Heart left ventricle (tissue), 16 donors: ENCODE measurements at regions of chr5 and their contacts with region 1.

Region 1: GRCh38 chr5:141564216-141564692 is 54.5 kb downstream of the DIAPH1 start:
- DNase-seq: peak in 3 of 5 donors; percentile 51 to 75 (median 72)
- ATAC-seq: peak; percentile 50 to 70 (median 59)
- H3K4me3 ChIP-seq: no peak overlapping the region
- H3K27ac ChIP-seq: peak overlapping the region in 11 of 12 donors; percentile 37 to 75 (median 61)
- H3K4me1 ChIP-seq: peaks cover 3 to 35% (median 23%) of the 10 kb centered on the region in 12 donors
- H3K27me3 ChIP-seq: no peaks in the 10 kb centered on the region
- CTCF ChIP-seq: peak; percentile 93 to 99 (median 96)
- POLR2A ChIP-seq: no peak

Region 2: GRCh38 chr5:141084487-141084990 is 479.7 kb before region 1 on chr5:
- intact Hi-C with region 1: loop called in 1 of 10 experiments (anchors 5 kb)
- DNase-seq: peak in 3 of 5 donors; percentile 40 to 52 (median 46)
- ATAC-seq: peak; percentile 75 to 89 (median 88)
- H3K4me3 ChIP-seq: peak overlapping the region; percentile 6 to 69 (median 54)
- H3K27ac ChIP-seq: peak overlapping the region in 10 of 12 donors; percentile 34 to 78 (median 71)
- H3K4me1 ChIP-seq: no peaks in the 10 kb centered on the region
- H3K27me3 ChIP-seq: peaks cover 0 to 21% (median 0%) of the 10 kb centered on the region in 9 donors
- CTCF ChIP-seq: peak; percentile 35 to 76 (median 54)
- POLR2A ChIP-seq: no peak

Region 3: GRCh38 chr5:141172378-141173204 is 391.7 kb before region 1 on chr5 and contains the start of gene PCDHB7:
- intact Hi-C with region 1: loop called in 3 of 10 experiments (anchors 10 kb)
- DNase-seq: no peak
- ATAC-seq: no peak
- H3K4me3 ChIP-seq: peak within 1 kb of the TSS in 10 of 12 donors; percentile 6 to 56 (median 25)
- H3K27ac ChIP-seq: no peak within 1 kb of the TSS
- H3K4me1 ChIP-seq: no peaks in the 10 kb centered on the region
- H3K27me3 ChIP-seq: peaks cover 0 to 47% (median 22%) of the 10 kb centered on the region in 9 donors
- CTCF ChIP-seq: peak in 11 of 12 donors; percentile 31 to 55 (median 42)
- POLR2A ChIP-seq: no peak
- total RNA-seq, gene PCDHB7: 0.52 to 1.3 (median 0.91) TPM

Region 4: GRCh38 chr5:141223112-141223783 is 341.0 kb before region 1 on chr5 and contains the start of gene PCDHB14:
- intact Hi-C with region 1: loop called in 3 of 10 experiments (anchors 5 to 10 kb)
- DNase-seq: no peak
- ATAC-seq: peak in 2 of 4 donors; percentile 43 to 57
- H3K4me3 ChIP-seq: peak within 1 kb of the TSS in 10 of 12 donors; percentile 15 to 43 (median 30)
- H3K27ac ChIP-seq: no peak within 1 kb of the TSS
- H3K4me1 ChIP-seq: no peaks in the 10 kb centered on the region
- H3K27me3 ChIP-seq: no peaks in the 10 kb centered on the region
- CTCF ChIP-seq: peak in 6 of 12 donors; percentile 17 to 41 (median 30)
- POLR2A ChIP-seq: no peak
- total RNA-seq, gene PCDHB14: 2.6 to 6.1 (median 4.3) TPM

Region 5: GRCh38 chr5:141320225-141321169 is 243.8 kb before region 1 on chr5 and contains the start of gene TAF7:
- intact Hi-C with region 1: loop called in 8 of 10 experiments (anchors 2 to 10 kb)
- DNase-seq: peak; percentile 89 to 96 (median 93)
- ATAC-seq: peak; percentile 99 to 100 (median 100)
- H3K4me3 ChIP-seq: peak within 1 kb of the TSS; percentile 32 to 88 (median 74)
- H3K27ac ChIP-seq: peak within 1 kb of the TSS; percentile 85 to 97 (median 92)
- H3K4me1 ChIP-seq: peaks cover 0 to 18% (median 8%) of the 10 kb centered on the region in 12 donors
- H3K27me3 ChIP-seq: no peaks in the 10 kb centered on the region
- CTCF ChIP-seq: peak; percentile 70 to 91 (median 86)
- POLR2A ChIP-seq: peak; percentile 91 to 94
- total RNA-seq, gene TAF7: 73.9 to 107 (median 99.9) TPM

Region 6: GRCh38 chr5:141412854-141413539 is 151.3 kb before region 1 on chr5 and contains the start of gene PCDHGA10:
- intact Hi-C with region 1: loop called in 7 of 10 experiments (anchors 2 to 5 kb)
- DNase-seq: peak in 3 of 5 donors; percentile 53 to 61 (median 59)
- ATAC-seq: peak; percentile 24 to 66 (median 64)
- H3K4me3 ChIP-seq: peak within 1 kb of the TSS in 10 of 12 donors; percentile 10 to 49 (median 36)
- H3K27ac ChIP-seq: peak within 1 kb of the TSS in 1 of 12 donors; percentile 36
- H3K4me1 ChIP-seq: peaks cover 0 to 4% (median 0%) of the 10 kb centered on the region in 12 donors
- H3K27me3 ChIP-seq: peaks cover 0 to 78% (median 0%) of the 10 kb centered on the region in 9 donors
- CTCF ChIP-seq: peak; percentile 26 to 60 (median 42)
- POLR2A ChIP-seq: no peak
- total RNA-seq, gene PCDHGA10: 3.3 to 11.3 (median 6.1) TPM

Region 7: GRCh38 chr5:141524604-141525597 is 39.4 kb before region 1 on chr5:
- intact Hi-C with region 1: loop called in 8 of 10 experiments (anchors 2 to 5 kb)
- DNase-seq: peak; percentile 88 to 91 (median 88)
- ATAC-seq: peak; percentile 53 to 73 (median 64)
- H3K4me3 ChIP-seq: no peak overlapping the region
- H3K27ac ChIP-seq: peak overlapping the region in 11 of 12 donors; percentile 38 to 95 (median 75)
- H3K4me1 ChIP-seq: peaks cover 12 to 77% (median 66%) of the 10 kb centered on the region in 12 donors
- H3K27me3 ChIP-seq: no peaks in the 10 kb centered on the region
- CTCF ChIP-seq: peak; percentile 98 to 100 (median 100)
- POLR2A ChIP-seq: no peak

Region 8: GRCh38 chr5:141543053-141543452 is 21.2 kb before region 1 on chr5:
- intact Hi-C with region 1: no loop called
- DNase-seq: no peak
- ATAC-seq: no peak
- H3K4me3 ChIP-seq: no peak overlapping the region
- H3K27ac ChIP-seq: no peak overlapping the region
- H3K4me1 ChIP-seq: no peaks in the 10 kb centered on the region
- H3K27me3 ChIP-seq: no peaks in the 10 kb centered on the region
- CTCF ChIP-seq: no peak
- POLR2A ChIP-seq: no peak